Activated CD8-positive, alpha-beta T cell treated with anti-CD3 and anti-CD28 coated beads for 36 hours (primary cell): ENCODE measurements at regions of chr9 and their contacts with region 1.

Region 1: GRCh38 chr9:94656200-94656599 is 16.9 kb upstream of the FBP1 start:
- DNase-seq: peak; percentile 76
- ATAC-seq: peak; percentile 99
- H3K4me3 Mint-ChIP-seq: peak overlapping the region; percentile 69
- H3K27ac Mint-ChIP-seq: peak overlapping the region; percentile 76
- H3K4me1 Mint-ChIP-seq: peaks cover 18% of the 10 kb centered on the region
- H3K27me3 Mint-ChIP-seq: no peaks in the 10 kb centered on the region
- CTCF ChIP-seq: no peak

Region 2: DNA sequence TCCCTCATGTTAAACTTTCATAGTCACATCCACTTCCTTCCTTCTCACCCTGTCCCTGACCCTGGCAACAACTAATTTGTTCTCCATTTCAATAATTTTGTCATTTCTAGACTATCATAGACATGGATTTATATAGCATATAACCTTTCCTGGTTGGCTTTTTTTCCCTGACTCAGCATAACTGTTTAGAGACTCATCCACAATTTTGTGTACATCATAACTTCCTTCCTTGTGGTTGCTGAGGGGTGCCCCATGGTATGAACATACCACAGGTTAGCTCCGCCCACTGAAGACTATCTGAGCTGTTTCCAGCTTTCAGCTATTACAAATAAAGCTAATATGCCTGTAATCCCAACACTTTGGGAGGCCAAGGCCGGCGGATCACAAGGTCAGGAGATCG is 942.5 kb before region 1 on chr9:
- CTCF ChIA-PET with region 1: no interaction called
- POLR2A ChIA-PET with region 1: no interaction called
- intact Hi-C with region 1: no loop called
- DNase-seq: peak; percentile 4
- ATAC-seq: no peak
- H3K4me3 Mint-ChIP-seq: no peak overlapping the region
- H3K27ac Mint-ChIP-seq: no peak overlapping the region
- H3K4me1 Mint-ChIP-seq: no peaks in the 10 kb centered on the region
- H3K27me3 Mint-ChIP-seq: peaks cover 5% of the 10 kb centered on the region
- CTCF ChIP-seq: no peak

Region 3: GRCh38 chr9:94668418-94668932 is 12.3 kb after region 1 on chr9:
- CTCF ChIA-PET with region 1: interaction called, 16 read pairs
- POLR2A ChIA-PET with region 1: no interaction called
- intact Hi-C with region 1: no loop called
- DNase-seq: no peak
- ATAC-seq: no peak
- H3K4me3 Mint-ChIP-seq: no peak overlapping the region
- H3K27ac Mint-ChIP-seq: no peak overlapping the region
- H3K4me1 Mint-ChIP-seq: peaks cover 5% of the 10 kb centered on the region
- H3K27me3 Mint-ChIP-seq: peaks cover 2% of the 10 kb centered on the region
- CTCF ChIP-seq: no peak